ENCODE measurements at regions of chr3 and their contacts with region 1.

Region 1: GRCh38 chr3:11290743-11291680 is 18.8 kb downstream of the ATG7 start:
- DNase-seq: no peak
- ATAC-seq: peak in 3 of 4 donors; percentile 42 to 48 (median 43)
- H3K4me3 ChIP-seq: no peak overlapping the region
- H3K27ac ChIP-seq: peak overlapping the region in 1 of 3 donors; percentile 1
- H3K4me1 ChIP-seq: peaks cover 0 to 4% (median 0%) of the 10 kb centered on the region in 4 donors
- H3K27me3 ChIP-seq: no peaks in the 10 kb centered on the region
- CTCF ChIP-seq: no peak
- POLR2A ChIP-seq: no peak

Region 2: GRCh38 chr3:10417849-10418248 is 873.2 kb before region 1 on chr3:
- intact Hi-C with region 1: loop called in 1 of 2 experiments (anchors 10 kb)
- DNase-seq: no peak
- ATAC-seq: peak; percentile 45 to 61 (median 52)
- H3K4me3 ChIP-seq: no peak overlapping the region
- H3K27ac ChIP-seq: no peak overlapping the region
- H3K4me1 ChIP-seq: no peaks in the 10 kb centered on the region
- H3K27me3 ChIP-seq: no peaks in the 10 kb centered on the region
- CTCF ChIP-seq: peak; percentile 15 to 29 (median 24)
- POLR2A ChIP-seq: no peak

Region 3: DNA sequence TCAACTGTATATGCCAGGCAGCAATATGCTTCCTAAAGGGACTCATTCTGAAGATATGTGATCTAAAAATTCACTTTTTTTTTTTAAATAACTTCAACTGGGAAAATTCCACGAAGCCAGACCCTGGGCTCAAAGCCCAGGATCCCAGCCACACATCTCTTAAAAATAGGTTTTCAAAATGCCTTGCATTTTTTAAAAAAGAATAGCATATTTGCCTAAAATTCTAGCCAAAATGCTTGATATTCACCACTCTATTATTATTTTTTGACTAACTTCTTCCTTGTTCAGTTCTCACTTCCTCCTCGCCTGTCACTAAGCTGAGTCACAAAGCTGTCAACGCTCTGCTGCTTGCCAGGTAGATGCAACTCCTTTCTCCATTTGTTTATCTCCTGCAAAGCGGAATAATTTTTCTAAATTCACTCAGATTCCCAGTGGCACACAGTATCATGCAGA is 380.7 kb after region 1 on chr3:
- intact Hi-C with region 1: no loop called
- DNase-seq: no peak
- ATAC-seq: peak in 1 of 4 donors; percentile 92
- H3K4me3 ChIP-seq: no peak overlapping the region
- H3K27ac ChIP-seq: no peak overlapping the region
- H3K4me1 ChIP-seq: peaks cover 0 to 16% (median 0%) of the 10 kb centered on the region in 4 donors
- H3K27me3 ChIP-seq: no peaks in the 10 kb centered on the region
- CTCF ChIP-seq: no peak
- POLR2A ChIP-seq: no peak